ENCODE measurements at regions of chr6 and their contacts with region 1.

Region 1: GRCh38 chr6:25788305-25788922 is 33.9 kb downstream of the SLC17A4 start:
- DNase-seq: no peak
- H3K4me3 ChIP-seq: no peak overlapping the region
- H3K27ac ChIP-seq: no peak overlapping the region
- H3K4me1 ChIP-seq: no peaks in the 10 kb centered on the region
- H3K27me3 ChIP-seq: no peaks in the 10 kb centered on the region
- CTCF ChIP-seq: peak; percentile 17 to 49 (median 37)

Region 2: GRCh38 chr6:25537349-25538018 is 250.9 kb before region 1 on chr6:
- intact Hi-C with region 1: no loop called
- DNase-seq: no peak
- H3K4me3 ChIP-seq: no peak overlapping the region
- H3K27ac ChIP-seq: no peak overlapping the region
- H3K4me1 ChIP-seq: no peaks in the 10 kb centered on the region
- H3K27me3 ChIP-seq: no peaks in the 10 kb centered on the region
- CTCF ChIP-seq: no peak

Region 3: GRCh38 chr6:25889877-25890853 is 101.8 kb after region 1 on chr6:
- intact Hi-C with region 1: loop called (anchors 2 kb)
- DNase-seq: no peak
- H3K4me3 ChIP-seq: no peak overlapping the region
- H3K27ac ChIP-seq: no peak overlapping the region
- H3K4me1 ChIP-seq: no peaks in the 10 kb centered on the region
- H3K27me3 ChIP-seq: no peaks in the 10 kb centered on the region
- CTCF ChIP-seq: peak in 2 of 3 experiments; percentile 55 to 59

Region 4: GRCh38 chr6:25942561-25943147 is 154.2 kb after region 1 on chr6:
- intact Hi-C with region 1: loop called (anchors 2 kb)
- DNase-seq: no peak
- H3K4me3 ChIP-seq: no peak overlapping the region
- H3K27ac ChIP-seq: no peak overlapping the region
- H3K4me1 ChIP-seq: no peaks in the 10 kb centered on the region
- H3K27me3 ChIP-seq: no peaks in the 10 kb centered on the region
- CTCF ChIP-seq: peak in 2 of 3 experiments; percentile 38 to 60

Region 5: DNA sequence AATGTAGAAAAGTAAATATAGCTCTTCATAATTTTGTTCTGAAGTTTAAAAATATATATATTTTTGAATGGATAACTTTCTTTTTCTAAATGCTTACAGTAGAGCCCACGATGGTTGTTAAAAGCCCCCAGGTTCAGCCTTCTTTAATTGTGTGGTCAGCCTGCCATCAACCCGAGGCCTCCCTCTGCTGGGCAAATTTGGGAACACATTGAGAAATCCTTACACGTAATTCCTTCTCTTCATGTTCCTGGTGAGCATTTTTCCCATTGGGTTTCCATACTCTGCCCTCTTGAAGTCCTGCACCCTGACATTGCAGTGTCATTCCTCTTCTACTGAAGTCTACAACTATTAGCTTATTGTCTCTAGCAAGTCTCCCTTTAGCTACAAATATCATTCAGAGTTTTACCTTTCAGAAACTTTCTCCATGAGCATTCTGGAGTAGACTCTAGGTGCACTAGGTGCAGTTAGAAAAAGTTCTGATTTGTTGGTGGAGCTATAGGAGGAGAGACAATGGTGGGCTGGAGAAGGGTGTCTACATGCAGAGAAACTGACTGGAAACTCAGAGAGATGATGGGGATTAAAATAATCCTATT is 214.8 kb after region 1 on chr6:
- intact Hi-C with region 1: loop called (anchors 10 kb)
- DNase-seq: peak in 1 of 2 donors; percentile 80
- H3K4me3 ChIP-seq: no peak overlapping the region
- H3K27ac ChIP-seq: no peak overlapping the region
- H3K4me1 ChIP-seq: no peaks in the 10 kb centered on the region
- H3K27me3 ChIP-seq: no peaks in the 10 kb centered on the region
- CTCF ChIP-seq: peak; percentile 54 to 78 (median 77)

Measured in ascending aorta (tissue), 2 donors.